Colonic mucosa (tissue), 4 donors: ENCODE measurements at regions of chr11 and their contacts with region 1.

Region 1: GRCh38 chr11:69683764-69684333 is 8.7 kb upstream of the LTO1 start:
- DNase-seq: no peak
- H3K4me3 ChIP-seq: no peak overlapping the region
- H3K27ac ChIP-seq: no peak overlapping the region
- H3K4me1 ChIP-seq: no peaks in the 10 kb centered on the region
- H3K27me3 ChIP-seq: no peaks in the 10 kb centered on the region
- CTCF ChIP-seq: peak; percentile 39

Region 2: GRCh38 chr11:69615565-69616251 is 68.1 kb before region 1 on chr11:
- intact Hi-C with region 1: no loop called
- DNase-seq: no peak
- H3K4me3 ChIP-seq: no peak overlapping the region
- H3K27ac ChIP-seq: no peak overlapping the region
- H3K4me1 ChIP-seq: no peaks in the 10 kb centered on the region
- H3K27me3 ChIP-seq: no peaks in the 10 kb centered on the region
- CTCF ChIP-seq: no peak

Region 3: DNA sequence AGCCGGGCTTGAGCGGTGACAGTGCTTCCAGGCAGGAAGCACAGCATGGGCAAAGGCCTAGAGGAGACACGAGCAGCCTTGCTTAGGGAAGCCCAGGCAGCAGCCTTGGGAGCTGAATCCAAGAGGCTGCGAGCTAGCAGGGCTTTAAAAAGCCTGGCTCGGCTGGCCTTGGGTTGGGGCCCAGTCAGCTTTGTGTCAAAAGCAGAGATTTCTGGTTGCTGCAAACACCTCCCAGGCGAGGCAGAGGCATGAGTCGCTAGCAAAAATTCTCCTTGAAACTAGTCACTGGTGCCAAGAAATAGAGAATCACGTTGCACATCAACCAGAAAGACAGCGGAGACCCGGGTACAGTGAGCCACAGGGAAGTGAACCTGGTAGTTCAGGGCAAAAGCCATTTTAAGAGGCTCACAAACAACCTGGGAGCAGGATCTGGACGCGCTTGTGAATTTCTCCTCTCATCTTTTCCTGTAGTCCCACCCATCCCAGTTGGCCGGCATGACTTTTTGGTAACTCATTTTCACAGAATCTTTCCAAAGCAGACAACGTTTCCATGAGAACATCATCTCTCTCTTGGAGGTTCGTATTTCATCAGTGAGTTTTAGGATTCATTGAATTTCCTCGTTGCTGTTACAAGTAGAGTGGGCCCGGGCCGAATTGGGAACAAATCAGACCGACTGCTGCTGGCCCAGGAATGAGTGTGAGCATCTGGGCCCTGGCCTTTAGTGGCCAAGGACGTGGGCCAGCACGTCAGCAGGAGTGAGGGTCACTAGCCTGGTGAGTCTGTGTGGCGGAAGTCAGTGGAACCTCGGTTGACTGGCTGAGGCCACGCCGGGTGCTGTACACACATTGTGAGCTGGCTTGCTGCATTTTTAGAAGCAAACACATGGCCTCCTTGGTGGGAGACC is 107.7 kb after region 1 on chr11:
- intact Hi-C with region 1: no loop called
- DNase-seq: no peak
- H3K4me3 ChIP-seq: no peak overlapping the region
- H3K27ac ChIP-seq: no peak overlapping the region
- H3K4me1 ChIP-seq: no peaks in the 10 kb centered on the region
- H3K27me3 ChIP-seq: no peaks in the 10 kb centered on the region
- CTCF ChIP-seq: no peak

Region 4: DNA sequence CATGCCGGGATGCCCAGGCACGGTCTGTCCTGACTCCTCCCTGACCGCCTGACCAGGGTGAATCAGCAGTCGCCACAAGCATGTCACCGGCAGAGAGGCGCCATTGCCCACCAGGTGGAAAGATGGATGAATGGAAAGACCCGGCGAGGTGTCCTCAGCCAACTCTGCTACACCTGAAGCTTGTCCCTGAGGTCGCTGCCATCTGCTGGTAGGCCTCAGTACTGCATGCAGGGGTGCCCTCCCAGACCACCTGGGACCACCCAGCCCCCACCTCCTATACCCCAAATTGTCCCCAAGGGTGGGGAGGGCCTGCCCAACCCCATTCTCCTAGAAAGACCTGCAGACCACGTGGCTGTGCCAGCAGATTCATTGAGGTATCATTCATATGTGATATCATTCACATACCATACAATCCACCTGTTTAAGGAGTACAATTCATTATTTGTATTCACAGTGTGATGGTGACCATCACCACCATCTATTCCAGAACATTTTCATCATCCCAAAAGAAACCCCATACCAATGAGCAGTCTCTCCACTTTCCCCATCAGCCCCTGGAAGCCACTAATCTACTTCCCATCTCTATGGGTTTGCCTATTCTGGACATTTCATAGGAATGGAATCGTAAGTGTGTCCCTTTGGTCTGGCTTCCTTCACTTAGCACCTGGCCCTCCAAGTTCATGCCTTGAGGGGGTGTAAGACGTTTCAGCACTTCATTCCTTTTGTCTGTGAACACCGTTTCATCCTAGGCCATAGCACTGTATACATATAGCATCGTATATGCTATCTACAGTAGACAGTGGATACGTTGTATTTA is 117.9 kb after region 1 on chr11:
- intact Hi-C with region 1: loop called (anchors 5 kb)
- DNase-seq: peak; percentile 30
- H3K4me3 ChIP-seq: no peak overlapping the region
- H3K27ac ChIP-seq: no peak overlapping the region
- H3K4me1 ChIP-seq: no peaks in the 10 kb centered on the region
- H3K27me3 ChIP-seq: no peaks in the 10 kb centered on the region
- CTCF ChIP-seq: peak; percentile 67

Region 5: DNA sequence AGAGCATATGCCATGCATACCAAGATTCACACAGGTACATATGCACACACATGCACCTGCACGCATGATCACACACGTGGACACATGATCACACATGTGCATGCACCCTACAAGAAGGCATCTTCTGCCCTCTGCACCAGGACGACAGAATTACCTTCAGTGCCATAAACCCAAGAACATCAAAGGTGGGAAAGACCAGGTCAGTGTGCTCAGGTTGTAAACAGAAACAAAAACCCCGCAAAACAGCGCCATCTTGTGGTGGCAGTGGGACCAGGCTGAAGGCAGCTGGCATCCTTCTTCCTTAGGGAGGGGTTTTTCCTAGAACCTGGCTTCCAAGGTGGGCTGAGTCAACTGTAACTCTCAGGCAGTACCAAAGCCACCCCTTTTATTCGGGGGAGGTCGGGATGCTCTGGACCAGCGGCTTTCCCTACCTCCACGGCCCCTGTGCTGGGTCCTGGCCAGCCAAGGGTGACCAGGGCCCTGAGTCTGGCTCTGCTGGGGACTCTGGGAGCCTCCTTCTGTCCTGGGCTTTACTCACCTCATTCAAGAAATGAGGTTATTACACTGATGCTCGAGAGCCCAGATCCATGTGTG is 204.7 kb after region 1 on chr11:
- intact Hi-C with region 1: loop called (anchors 2 kb)
- DNase-seq: peak; percentile 83
- H3K4me3 ChIP-seq: no peak overlapping the region
- H3K27ac ChIP-seq: no peak overlapping the region
- H3K4me1 ChIP-seq: peaks cover 11% of the 10 kb centered on the region
- H3K27me3 ChIP-seq: no peaks in the 10 kb centered on the region
- CTCF ChIP-seq: peak; percentile 94

Region 6: GRCh38 chr11:70191495-70192140 is 507.8 kb after region 1 on chr11:
- intact Hi-C with region 1: loop called (anchors 5 kb)
- DNase-seq: peak; percentile 72
- H3K4me3 ChIP-seq: no peak overlapping the region
- H3K27ac ChIP-seq: no peak overlapping the region
- H3K4me1 ChIP-seq: no peaks in the 10 kb centered on the region
- H3K27me3 ChIP-seq: no peaks in the 10 kb centered on the region
- CTCF ChIP-seq: peak; percentile 85